CD4-positive, alpha-beta T cell (primary cell): ENCODE measurements at regions of chr3 and their contacts with region 1.

Region 1: DNA sequence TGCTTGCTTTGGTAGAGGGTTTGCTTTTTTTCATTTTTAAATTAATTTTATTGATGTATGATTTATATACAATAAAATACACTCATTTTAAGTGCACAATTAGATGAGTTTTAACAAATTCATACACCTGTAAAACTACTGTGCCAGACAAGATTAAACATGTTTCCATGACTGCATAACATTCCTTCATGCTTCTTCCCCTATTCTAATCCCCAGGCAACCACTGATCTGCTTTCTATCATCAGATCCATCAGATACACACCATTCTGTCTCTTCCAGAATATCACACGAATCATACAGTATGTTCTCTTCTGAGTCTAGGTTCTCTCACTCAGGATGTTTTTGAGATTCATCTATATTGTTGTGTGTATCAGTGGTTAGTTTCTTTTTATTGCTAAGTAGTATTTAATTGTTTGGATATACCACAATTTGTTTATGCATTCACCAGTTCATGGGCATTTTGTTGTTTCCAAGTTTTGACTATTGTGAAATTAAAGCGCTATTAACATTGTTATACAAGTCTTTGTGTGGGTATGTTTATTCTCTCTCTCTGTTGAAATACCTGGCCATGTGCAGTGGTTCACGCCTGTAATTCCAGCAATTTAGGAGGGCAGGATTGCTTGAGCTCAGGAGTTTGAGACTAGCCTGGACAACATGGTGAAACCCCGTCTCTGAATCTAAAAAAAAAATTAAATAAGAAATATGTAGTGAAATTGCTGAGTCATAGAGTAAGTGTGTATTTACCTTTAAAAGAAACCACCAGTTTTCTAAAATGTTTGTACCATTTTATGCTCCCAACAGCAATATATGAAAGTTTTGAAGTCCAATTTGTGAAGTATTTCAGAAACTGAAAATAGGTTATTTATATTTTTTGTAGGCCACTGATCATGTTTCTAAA is 7.0 kb upstream of the TFG start:
- DNase-seq: no peak
- ATAC-seq: no peak
- H3K4me3 ChIP-seq: no peak overlapping the region
- H3K4me3 Mint-ChIP-seq: no peak overlapping the region
- H3K27ac ChIP-seq: no peak overlapping the region
- H3K27ac Mint-ChIP-seq: no peak overlapping the region
- H3K4me1 ChIP-seq: no peaks in the 10 kb centered on the region
- H3K4me1 Mint-ChIP-seq: no peaks in the 10 kb centered on the region
- H3K27me3 ChIP-seq: no peaks in the 10 kb centered on the region
- H3K27me3 Mint-ChIP-seq: peaks cover 70% of the 10 kb centered on the region
- CTCF ChIP-seq: no peak

Region 2: DNA sequence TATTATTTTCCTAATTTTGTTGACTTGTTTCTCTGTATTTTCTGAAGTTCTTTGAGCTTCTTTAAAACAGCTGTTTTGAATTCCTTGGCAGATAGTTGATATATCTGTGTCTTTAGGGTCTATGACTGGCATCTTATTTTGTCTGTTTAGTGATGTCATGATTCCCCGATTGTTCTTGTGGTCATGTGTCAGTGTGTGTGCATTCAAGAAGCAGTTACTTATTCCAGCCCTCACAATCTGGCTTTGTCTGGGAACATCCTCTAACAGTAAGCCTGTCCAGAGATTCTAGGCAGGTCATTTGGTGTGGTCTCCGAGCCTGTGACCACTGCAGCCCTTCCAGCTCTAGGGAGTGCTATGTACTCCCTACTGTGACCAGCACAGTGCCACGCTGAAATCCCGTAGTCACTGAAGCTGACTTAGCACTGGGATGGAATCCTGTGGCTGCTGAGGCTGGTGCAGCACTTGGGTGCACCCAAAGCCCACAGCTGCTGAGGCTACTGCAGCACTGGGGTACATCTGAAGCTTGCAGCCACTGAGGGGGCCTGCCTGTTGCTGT is 294.3 kb before region 1 on chr3:
- CTCF ChIA-PET with region 1: no interaction called
- POLR2A ChIA-PET with region 1: no interaction called
- intact Hi-C with region 1: loop called in 1 of 2 experiments (anchors 2 kb)
- DNase-seq: no peak
- ATAC-seq: no peak
- H3K4me3 ChIP-seq: no peak overlapping the region
- H3K4me3 Mint-ChIP-seq: no peak overlapping the region
- H3K27ac ChIP-seq: no peak overlapping the region
- H3K27ac Mint-ChIP-seq: no peak overlapping the region
- H3K4me1 ChIP-seq: peaks cover 4% of the 10 kb centered on the region
- H3K4me1 Mint-ChIP-seq: peaks cover 25% of the 10 kb centered on the region
- H3K27me3 ChIP-seq: no peaks in the 10 kb centered on the region
- H3K27me3 Mint-ChIP-seq: no peaks in the 10 kb centered on the region
- CTCF ChIP-seq: no peak